Activated T-helper 2 cell treated with anti-CD3 and anti-CD28 coated beads, Interferon-gamma antibody, Interleukin-2, Interleukin-4, amounts not matched to agents 10 μg/mL and 5 μg/mL and 100 μg/mL, durations not matched to agents 14 hours and 24 hours and 36 hours (primary cell): ENCODE measurements at regions of chr1 and their contacts with region 1.

Region 1: GRCh38 chr1:156625436-156626078 is 6.3 kb downstream of the HAPLN2 start:
- DNase-seq: peak; percentile 31
- H3K4me3 Mint-ChIP-seq: peak overlapping the region; percentile 7
- H3K27ac Mint-ChIP-seq: no peak overlapping the region
- H3K4me1 Mint-ChIP-seq: peaks cover 8% of the 10 kb centered on the region
- H3K27me3 Mint-ChIP-seq: peaks cover 51% of the 10 kb centered on the region

Region 2: GRCh38 chr1:156385534-156386031 is 240.0 kb before region 1 on chr1:
- intact Hi-C with region 1: loop called (anchors 5 kb)
- DNase-seq: peak; percentile 61
- H3K4me3 Mint-ChIP-seq: no peak overlapping the region
- H3K27ac Mint-ChIP-seq: no peak overlapping the region
- H3K4me1 Mint-ChIP-seq: peaks cover 4% of the 10 kb centered on the region
- H3K27me3 Mint-ChIP-seq: peaks cover 34% of the 10 kb centered on the region

Region 3: DNA sequence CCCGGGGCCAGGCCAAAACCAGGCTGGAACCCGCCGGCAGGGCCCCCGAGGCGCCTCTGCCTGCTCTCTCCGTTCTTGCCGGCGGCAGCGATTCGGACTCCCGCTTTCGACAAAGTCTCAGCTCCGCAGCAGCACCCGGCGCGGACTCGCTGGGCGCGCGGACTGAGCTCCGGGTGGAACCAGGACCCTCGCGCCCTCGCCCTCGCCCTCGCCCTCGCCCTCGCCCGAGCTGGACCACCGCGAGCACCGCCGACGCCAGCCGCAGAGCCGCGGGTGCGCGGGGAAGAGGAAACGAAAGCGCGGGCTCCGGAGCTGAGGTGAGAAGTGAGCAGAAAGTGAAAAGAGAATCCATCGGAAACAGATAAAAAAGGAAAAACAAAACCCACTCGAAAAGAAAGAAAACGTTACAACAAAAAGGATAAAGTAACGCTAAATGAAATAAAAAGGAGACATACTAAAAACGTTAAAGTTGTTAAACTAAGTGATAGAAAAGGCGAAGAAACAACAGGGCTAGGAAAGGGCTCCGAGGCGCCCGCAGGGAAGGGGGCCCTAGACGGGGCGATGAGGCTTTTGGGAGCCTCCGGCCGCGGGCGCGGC is 189.9 kb before region 1 on chr1:
- intact Hi-C with region 1: loop called (anchors 2 kb)
- DNase-seq: peak; percentile 15
- H3K4me3 Mint-ChIP-seq: peak overlapping the region; percentile 70
- H3K27ac Mint-ChIP-seq: peak overlapping the region; percentile 36
- H3K4me1 Mint-ChIP-seq: peaks cover 40% of the 10 kb centered on the region
- H3K27me3 Mint-ChIP-seq: peaks cover 82% of the 10 kb centered on the region

Region 4: GRCh38 chr1:156659994-156660751 is 34.6 kb after region 1 on chr1:
- intact Hi-C with region 1: loop called (anchors 1 kb)
- DNase-seq: peak; percentile 89
- H3K4me3 Mint-ChIP-seq: peak overlapping the region; percentile 90
- H3K27ac Mint-ChIP-seq: peak overlapping the region; percentile 97
- H3K4me1 Mint-ChIP-seq: peaks cover 41% of the 10 kb centered on the region
- H3K27me3 Mint-ChIP-seq: peaks cover 26% of the 10 kb centered on the region

Region 5: DNA sequence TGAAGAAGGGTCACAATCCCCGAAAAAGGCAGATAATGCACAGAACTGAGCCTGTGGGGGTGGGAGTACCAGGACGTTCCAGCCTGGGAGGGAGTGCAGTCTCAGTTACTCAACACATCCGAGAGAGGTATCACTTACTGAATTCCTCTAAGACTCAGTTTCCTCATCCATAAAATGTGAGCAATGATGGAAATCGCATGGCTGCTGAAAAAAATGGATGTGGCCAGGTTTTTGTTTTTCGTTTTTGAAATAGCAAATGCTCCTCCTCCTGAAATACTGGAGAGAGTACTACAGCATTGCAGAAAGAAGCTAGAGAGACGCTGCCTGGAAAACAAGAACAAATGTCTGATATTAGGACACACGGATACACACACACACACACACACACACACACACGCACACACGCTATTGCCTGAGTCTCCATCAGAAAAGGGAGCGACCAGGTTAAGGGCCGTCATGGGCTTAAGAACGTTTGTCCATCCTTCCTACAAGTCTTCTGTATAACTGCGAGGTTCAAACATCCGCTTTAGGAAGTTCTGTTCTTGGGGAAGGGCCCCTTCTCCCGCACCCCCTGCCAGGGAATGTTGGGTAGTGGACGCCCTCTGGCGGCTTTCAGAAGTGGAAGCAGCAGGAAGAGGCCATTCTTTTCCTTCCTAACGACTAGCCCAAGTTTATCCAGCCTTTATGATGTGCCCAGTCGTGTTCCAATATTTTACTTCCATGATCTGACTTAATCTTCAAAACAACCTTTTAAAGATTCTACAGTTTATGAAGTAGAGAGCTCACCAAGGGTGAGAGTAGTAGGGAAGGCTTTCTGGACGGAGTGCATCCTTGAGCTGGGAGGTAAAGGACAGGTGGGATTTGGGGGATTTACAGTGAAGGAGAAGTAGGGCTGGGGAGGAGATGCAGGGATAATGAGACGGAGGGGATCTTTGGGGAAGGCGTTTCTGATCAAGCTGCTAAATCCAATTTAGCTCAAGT is 52.3 kb after region 1 on chr1:
- intact Hi-C with region 1: loop called (anchors 2 kb)
- DNase-seq: no peak
- H3K4me3 Mint-ChIP-seq: no peak overlapping the region
- H3K27ac Mint-ChIP-seq: no peak overlapping the region
- H3K4me1 Mint-ChIP-seq: peaks cover 8% of the 10 kb centered on the region
- H3K27me3 Mint-ChIP-seq: peaks cover 74% of the 10 kb centered on the region

Region 6: GRCh38 chr1:156705918-156706656 is 80.5 kb after region 1 on chr1:
- intact Hi-C with region 1: loop called (anchors 2 kb)
- DNase-seq: peak; percentile 50
- H3K4me3 Mint-ChIP-seq: peak overlapping the region; percentile 76
- H3K27ac Mint-ChIP-seq: no peak overlapping the region
- H3K4me1 Mint-ChIP-seq: peaks cover 13% of the 10 kb centered on the region
- H3K27me3 Mint-ChIP-seq: peaks cover 52% of the 10 kb centered on the region